ENCODE measurements at regions of chr19 and their contacts with region 1.

Region 1: GRCh38 chr19:4186087-4186993 is 3.9 kb downstream of the ANKRD24 start:
- DNase-seq: peak; percentile 61
- H3K4me3 ChIP-seq: no peak overlapping the region
- H3K27ac ChIP-seq: no peak overlapping the region
- H3K4me1 ChIP-seq: peaks cover 3% of the 10 kb centered on the region
- H3K27me3 ChIP-seq: no peaks in the 10 kb centered on the region
- CTCF ChIP-seq: peak; percentile 79 to 89
- POLR2A ChIP-seq: no peak

Region 2: DNA sequence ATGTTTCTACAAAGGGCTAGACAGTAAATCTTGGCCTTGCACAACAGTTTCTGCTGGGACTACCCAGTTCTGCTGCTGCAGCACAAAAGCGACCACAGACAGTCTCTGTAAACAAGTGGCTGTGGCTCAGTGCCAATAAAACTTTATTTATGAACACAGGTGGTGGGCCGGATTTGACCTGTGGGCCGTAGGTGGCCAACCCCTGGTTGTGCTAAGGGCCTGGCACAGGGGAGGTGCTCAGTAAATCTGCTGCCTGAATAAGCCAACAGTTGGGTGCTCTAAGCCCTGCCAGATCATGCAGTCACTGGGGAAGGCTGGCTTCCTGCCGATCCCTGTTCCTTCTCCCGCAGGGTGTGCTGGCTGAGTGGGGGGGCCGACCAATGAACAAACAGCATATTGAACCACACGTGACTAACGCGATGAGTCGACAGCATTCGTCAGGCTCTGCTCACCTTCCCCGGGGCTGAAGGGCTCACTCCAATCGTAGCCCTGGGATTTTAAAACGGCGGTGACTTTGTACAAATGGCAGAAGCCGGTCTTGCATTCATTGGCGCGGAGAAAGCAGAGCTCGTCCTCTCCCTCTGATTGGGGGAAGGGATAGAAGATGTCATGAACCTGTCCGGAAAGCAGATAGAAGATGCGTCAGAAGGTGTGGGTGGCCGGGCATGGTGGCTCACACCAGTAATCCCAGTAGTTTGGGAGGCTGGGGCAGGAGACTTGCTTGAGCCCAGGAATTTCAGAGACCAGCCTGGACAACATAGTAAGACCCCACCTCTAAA is 508.1 kb after region 1 on chr19:
- CTCF ChIA-PET with region 1: no interaction called
- POLR2A ChIA-PET with region 1: no interaction called
- dilution Hi-C with region 1: no loop called
- intact Hi-C with region 1: loop called (anchors 5 kb)
- DNase-seq: peak; percentile 78
- H3K4me3 ChIP-seq: no peak overlapping the region
- H3K27ac ChIP-seq: peak overlapping the region; percentile 45
- H3K4me1 ChIP-seq: peaks cover 9% of the 10 kb centered on the region
- H3K27me3 ChIP-seq: no peaks in the 10 kb centered on the region
- CTCF ChIP-seq: no peak
- POLR2A ChIP-seq: peak; percentile 31